Ascending aorta (tissue), 2 donors: ENCODE measurements at regions of chr2 and their contacts with region 1.

Region 1: GRCh38 chr2:201235860-201236811 is 24.2 kb upstream of the CASP8 start:
- DNase-seq: peak in 1 of 2 donors; percentile 75
- H3K4me3 ChIP-seq: peak overlapping the region; percentile 21 to 35
- H3K27ac ChIP-seq: no peak overlapping the region
- H3K4me1 ChIP-seq: peaks cover 0 to 12% of the 10 kb centered on the region in 2 donors
- H3K27me3 ChIP-seq: no peaks in the 10 kb centered on the region
- CTCF ChIP-seq: peak; percentile 49 to 73 (median 67)

Region 2: DNA sequence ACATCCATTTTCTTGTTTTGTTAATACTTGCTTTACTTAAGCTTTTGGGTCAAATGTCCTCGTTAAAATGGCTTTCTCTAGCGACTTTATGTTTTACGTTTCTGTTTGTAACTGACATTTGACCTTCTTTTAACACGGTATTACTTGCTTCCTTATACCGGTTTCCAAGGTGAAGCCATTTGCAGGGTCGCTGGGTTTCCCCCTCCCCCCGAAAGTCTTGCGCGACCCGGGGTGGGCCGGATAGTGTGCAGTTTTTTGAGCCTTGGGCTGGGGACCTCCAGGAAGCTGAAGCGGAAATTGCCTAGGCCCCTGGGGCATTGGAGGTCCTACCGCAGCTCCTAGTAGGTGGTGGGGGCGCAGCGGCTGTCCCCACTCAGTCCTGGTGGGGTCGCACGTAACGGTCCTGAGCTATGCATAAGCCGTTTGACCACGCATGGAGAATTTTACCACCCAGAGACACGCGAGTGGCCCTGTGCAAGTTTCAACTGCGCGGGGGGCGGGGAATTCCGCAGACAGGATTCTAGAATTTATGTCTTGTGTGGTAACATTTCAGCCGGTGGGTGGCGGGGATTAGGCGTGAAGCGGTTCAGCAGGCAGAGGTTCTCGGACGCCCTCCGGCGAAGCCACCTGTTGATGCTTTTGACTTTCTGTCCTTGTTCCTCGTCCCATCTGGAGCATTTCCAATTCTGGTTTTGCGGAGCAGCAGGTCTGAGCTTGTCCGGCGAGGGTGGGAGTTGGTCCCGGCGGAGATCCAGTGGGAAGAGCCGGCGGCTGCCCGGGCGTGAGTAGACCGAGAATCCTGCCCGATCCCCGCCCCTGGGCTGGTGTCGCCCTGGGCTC is 117.8 kb before region 1 on chr2:
- intact Hi-C with region 1: no loop called
- DNase-seq: peak; percentile 55 to 91
- H3K4me3 ChIP-seq: peak overlapping the region; percentile 77 to 85
- H3K27ac ChIP-seq: peak overlapping the region; percentile 99
- H3K4me1 ChIP-seq: peaks cover 3 to 16% of the 10 kb centered on the region in 2 donors
- H3K27me3 ChIP-seq: no peaks in the 10 kb centered on the region
- CTCF ChIP-seq: peak in 2 of 3 experiments; percentile 3 to 53

Region 3: GRCh38 chr2:201363857-201364560 is 127.9 kb after region 1 on chr2:
- intact Hi-C with region 1: loop called (anchors 5 kb)
- DNase-seq: no peak
- H3K4me3 ChIP-seq: no peak overlapping the region
- H3K27ac ChIP-seq: no peak overlapping the region
- H3K4me1 ChIP-seq: no peaks in the 10 kb centered on the region
- H3K27me3 ChIP-seq: no peaks in the 10 kb centered on the region
- CTCF ChIP-seq: peak; percentile 52 to 61 (median 59)

Region 4: GRCh38 chr2:201451292-201452057 is 215.3 kb after region 1 on chr2 and contains the starts of genes STRADB and TRAK2:
- intact Hi-C with region 1: loop called (anchors 2 kb)
- DNase-seq: peak; percentile 85 to 97
- H3K4me3 ChIP-seq: peak within 1 kb of the TSS; percentile 88 to 90
- H3K27ac ChIP-seq: peak within 1 kb of the TSS; percentile 80 to 89
- H3K4me1 ChIP-seq: peaks cover 10 to 28% of the 10 kb centered on the region in 2 donors
- H3K27me3 ChIP-seq: no peaks in the 10 kb centered on the region
- CTCF ChIP-seq: peak; percentile 18 to 31 (median 20)
- total RNA-seq, gene STRADB: 22.8 TPM
- total RNA-seq, gene TRAK2: 40.3 TPM

Region 5: DNA sequence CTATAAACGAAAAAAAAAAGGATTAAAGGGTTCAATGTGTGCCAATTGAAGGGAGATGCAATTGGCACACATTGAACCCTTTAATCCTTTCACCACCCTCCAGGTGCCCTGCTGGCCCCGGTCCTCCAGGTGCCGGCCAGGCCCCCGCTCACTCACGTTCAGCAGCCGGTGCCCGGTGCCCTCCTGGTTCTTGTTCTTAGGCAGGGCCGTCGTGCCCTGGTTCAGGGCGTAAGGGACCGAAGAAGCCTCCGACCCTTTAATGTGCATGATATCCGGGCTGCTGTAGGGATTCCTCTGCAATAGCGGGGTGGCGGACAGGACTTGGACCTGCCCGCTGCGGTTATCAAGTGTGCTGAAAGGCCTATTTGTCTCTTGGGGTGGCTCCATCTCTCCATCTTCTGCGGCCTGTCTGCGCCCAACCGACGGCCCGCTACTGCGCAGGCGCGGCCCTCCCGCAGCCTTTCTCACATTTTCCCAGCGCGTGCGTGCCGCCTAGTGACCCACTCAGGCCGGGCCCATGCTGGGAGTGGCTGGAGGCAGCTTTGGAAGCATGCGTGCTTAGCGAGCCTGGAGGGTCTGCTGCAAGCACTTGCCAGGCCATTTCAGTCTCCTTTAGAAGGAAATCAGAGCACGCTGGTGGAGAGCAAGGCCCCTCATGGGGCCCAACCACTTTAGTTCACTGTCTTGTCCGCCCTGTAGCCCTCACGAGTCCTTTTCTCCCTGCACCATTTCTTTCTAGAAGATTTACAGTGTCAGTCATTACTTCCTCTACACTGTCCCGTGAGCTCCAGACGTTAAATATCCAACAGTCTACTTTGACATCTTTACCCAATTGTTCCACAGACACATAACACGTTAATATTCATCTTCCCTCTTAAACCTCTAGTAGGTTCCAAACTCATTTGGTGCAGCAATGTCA is 382.9 kb after region 1 on chr2:
- intact Hi-C with region 1: loop called (anchors 2 kb)
- DNase-seq: peak in 1 of 2 donors; percentile 83
- H3K4me3 ChIP-seq: peak overlapping the region in 1 of 2 donors; percentile 54
- H3K27ac ChIP-seq: peak overlapping the region in 1 of 2 donors; percentile 9
- H3K4me1 ChIP-seq: peaks cover 0 to 3% of the 10 kb centered on the region in 2 donors
- H3K27me3 ChIP-seq: no peaks in the 10 kb centered on the region
- CTCF ChIP-seq: peak; percentile 47 to 61 (median 51)

Region 6: DNA sequence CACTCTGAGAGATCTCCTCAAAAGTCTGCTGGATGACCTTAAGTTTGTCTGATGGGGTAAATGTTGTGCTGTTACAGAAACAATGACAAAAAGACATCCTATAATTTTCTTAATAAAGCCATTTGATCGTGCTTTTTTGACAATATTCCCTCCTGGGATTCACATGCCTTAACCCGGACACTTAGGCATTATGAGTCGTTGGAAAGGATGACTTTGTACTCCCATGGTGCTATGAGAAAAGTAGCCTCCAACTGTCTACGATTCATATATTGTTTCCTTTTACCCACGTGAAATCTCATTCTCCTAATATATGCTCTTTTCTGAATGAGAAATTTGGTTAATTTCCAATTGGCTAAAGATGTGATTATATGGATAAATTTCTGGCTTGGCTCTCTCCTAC is 468.4 kb after region 1 on chr2:
- intact Hi-C with region 1: loop called (anchors 5 kb)
- DNase-seq: no peak
- H3K4me3 ChIP-seq: no peak overlapping the region
- H3K27ac ChIP-seq: no peak overlapping the region
- H3K4me1 ChIP-seq: no peaks in the 10 kb centered on the region
- H3K27me3 ChIP-seq: no peaks in the 10 kb centered on the region
- CTCF ChIP-seq: no peak